ENCODE measurements at regions of chr1 and their contacts with region 1.

Region 1: GRCh38 chr1:198937231-198938031 is 298.6 kb downstream of the PTPRC start:
- DNase-seq: peak; percentile 95
- H3K4me3 Mint-ChIP-seq: no peak overlapping the region
- H3K27ac Mint-ChIP-seq: no peak overlapping the region
- H3K4me1 Mint-ChIP-seq: peaks cover 4% of the 10 kb centered on the region
- H3K27me3 Mint-ChIP-seq: no peaks in the 10 kb centered on the region
- CTCF ChIP-seq: no peak

Region 2: DNA sequence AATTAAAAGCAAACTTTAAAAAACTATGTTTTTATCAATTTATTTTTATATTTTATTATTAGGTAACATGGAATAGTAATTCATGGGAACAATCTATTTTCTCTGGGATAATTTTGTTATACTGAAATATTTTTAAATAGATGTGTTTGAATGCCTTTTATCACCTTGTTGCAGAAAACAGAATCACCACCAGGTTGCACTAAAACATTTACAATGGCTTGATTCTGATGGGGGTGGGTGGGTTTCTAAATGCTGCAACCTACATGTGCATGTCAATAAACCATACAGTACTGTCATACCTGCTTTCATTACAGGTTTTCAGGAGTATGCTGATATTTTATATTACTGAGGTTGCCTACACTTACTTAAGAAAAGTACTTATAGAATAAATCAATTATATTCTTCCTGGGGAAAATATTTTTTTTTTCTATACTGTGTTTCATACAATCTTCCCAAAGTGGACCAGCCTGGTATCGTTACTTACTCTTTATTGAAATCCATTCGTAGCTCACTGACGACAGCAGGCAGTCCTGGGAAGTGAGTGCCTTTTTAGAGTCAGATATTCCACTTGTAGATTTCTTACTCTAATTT is 165.8 kb before region 1 on chr1:
- CTCF ChIA-PET with region 1: interaction called, 5 read pairs
- POLR2A ChIA-PET with region 1: interaction called, 9 read pairs
- intact Hi-C with region 1: loop called (anchors 1 kb)
- DNase-seq: peak; percentile 70
- H3K4me3 Mint-ChIP-seq: no peak overlapping the region
- H3K27ac Mint-ChIP-seq: no peak overlapping the region
- H3K4me1 Mint-ChIP-seq: peaks cover 4% of the 10 kb centered on the region
- H3K27me3 Mint-ChIP-seq: no peaks in the 10 kb centered on the region
- CTCF ChIP-seq: peak; percentile 89

Region 3: GRCh38 chr1:198880818-198881597 is 56.4 kb before region 1 on chr1:
- CTCF ChIA-PET with region 1: interaction called, 3 read pairs
- POLR2A ChIA-PET with region 1: interaction called, 27 read pairs
- intact Hi-C with region 1: loop called (anchors 1 kb)
- DNase-seq: peak; percentile 97
- H3K4me3 Mint-ChIP-seq: peak overlapping the region; percentile 53
- H3K27ac Mint-ChIP-seq: peak overlapping the region; percentile 94
- H3K4me1 Mint-ChIP-seq: peaks cover 47% of the 10 kb centered on the region
- H3K27me3 Mint-ChIP-seq: no peaks in the 10 kb centered on the region
- CTCF ChIP-seq: no peak

Region 4: GRCh38 chr1:198922638-198923430 is 14.6 kb before region 1 on chr1:
- CTCF ChIA-PET with region 1: interaction called, 65 read pairs
- POLR2A ChIA-PET with region 1: interaction called, 336 read pairs
- intact Hi-C with region 1: no loop called
- DNase-seq: no peak
- H3K4me3 Mint-ChIP-seq: no peak overlapping the region
- H3K27ac Mint-ChIP-seq: peak overlapping the region; percentile 43
- H3K4me1 Mint-ChIP-seq: peaks cover 43% of the 10 kb centered on the region
- H3K27me3 Mint-ChIP-seq: no peaks in the 10 kb centered on the region
- CTCF ChIP-seq: no peak

Region 5: DNA sequence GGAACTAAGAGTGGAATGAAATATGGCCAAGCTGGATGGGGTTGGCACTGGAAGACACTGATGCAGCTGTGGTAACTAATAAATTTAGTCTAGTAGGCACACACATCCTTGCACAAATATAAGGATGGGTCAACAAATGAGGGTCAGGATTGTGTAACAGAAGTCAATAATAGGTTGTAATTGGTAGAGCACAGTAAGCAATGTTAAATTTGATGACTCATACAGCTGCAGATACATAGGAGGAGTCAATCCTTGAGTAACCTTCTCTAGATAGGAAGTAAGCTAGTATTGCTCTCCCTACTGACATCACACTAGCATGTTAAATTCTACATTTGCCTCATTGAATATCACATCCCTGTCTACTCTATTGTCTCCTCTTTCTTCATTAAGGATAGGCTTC is 33.5 kb after region 1 on chr1:
- CTCF ChIA-PET with region 1: interaction called, 3 read pairs
- POLR2A ChIA-PET with region 1: interaction called, 24 read pairs
- intact Hi-C with region 1: no loop called
- DNase-seq: peak; percentile 77
- H3K4me3 Mint-ChIP-seq: no peak overlapping the region
- H3K27ac Mint-ChIP-seq: peak overlapping the region; percentile 32
- H3K4me1 Mint-ChIP-seq: peaks cover 14% of the 10 kb centered on the region
- H3K27me3 Mint-ChIP-seq: no peaks in the 10 kb centered on the region
- CTCF ChIP-seq: no peak

Region 6: GRCh38 chr1:199243423-199244061 is 306.1 kb after region 1 on chr1:
- CTCF ChIA-PET with region 1: no interaction called
- POLR2A ChIA-PET with region 1: no interaction called
- intact Hi-C with region 1: loop called (anchors 1 kb)
- DNase-seq: peak; percentile 71
- H3K4me3 Mint-ChIP-seq: no peak overlapping the region
- H3K27ac Mint-ChIP-seq: no peak overlapping the region
- H3K4me1 Mint-ChIP-seq: peaks cover 6% of the 10 kb centered on the region
- H3K27me3 Mint-ChIP-seq: no peaks in the 10 kb centered on the region
- CTCF ChIP-seq: peak; percentile 90

Region 7: GRCh38 chr1:199463521-199464128 is 526.2 kb after region 1 on chr1:
- CTCF ChIA-PET with region 1: no interaction called
- POLR2A ChIA-PET with region 1: interaction called, 8 read pairs
- intact Hi-C with region 1: loop called (anchors 2 kb)
- DNase-seq: peak; percentile 80
- H3K4me3 Mint-ChIP-seq: no peak overlapping the region
- H3K27ac Mint-ChIP-seq: no peak overlapping the region
- H3K4me1 Mint-ChIP-seq: no peaks in the 10 kb centered on the region
- H3K27me3 Mint-ChIP-seq: no peaks in the 10 kb centered on the region
- CTCF ChIP-seq: peak; percentile 79

Measured in MCF 10A (cell line).